HEK293 (cell line): ENCODE measurements at regions of chr2 and their contacts with region 1.

Region 1: DNA sequence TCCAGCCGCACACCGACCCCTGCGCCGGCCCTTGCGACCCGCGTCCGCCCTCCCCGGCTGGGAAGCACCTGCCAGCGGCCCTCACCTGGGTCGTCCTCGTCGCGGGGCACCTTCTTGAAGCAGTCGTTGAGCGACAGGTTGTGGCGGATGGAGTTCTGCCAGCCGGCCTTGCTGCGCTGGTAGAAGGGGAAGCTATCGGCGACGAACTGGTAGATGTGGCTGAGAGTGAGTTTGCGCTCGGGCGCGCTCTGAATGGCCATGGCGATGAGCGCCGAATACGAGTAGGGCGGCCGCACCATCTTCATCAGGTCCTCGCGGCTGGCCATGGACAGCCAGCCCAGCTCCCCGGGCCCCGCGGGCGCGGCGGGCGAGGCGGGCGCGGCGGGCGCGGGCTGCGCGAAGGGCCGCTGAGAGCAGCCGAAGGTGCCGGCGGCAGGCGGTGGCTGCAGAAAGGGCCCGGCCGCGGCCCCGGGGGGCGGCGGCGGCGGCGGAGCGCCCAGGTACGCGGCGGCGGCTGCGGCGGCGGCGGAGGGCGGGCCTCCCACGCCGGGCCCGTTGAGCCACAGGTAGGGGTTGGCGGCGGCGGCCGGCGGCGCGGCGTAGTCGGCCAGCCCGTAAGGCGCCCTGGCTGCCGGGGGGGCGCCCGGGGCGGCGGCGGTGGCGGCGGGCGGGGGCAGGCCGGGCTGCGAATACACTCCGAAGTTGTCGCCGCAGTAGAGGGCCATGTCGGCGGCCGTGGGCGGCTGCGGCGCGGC is 505 bp downstream of the FOXI3 start:
- H3K4me3 ChIP-seq: peak overlapping the region; percentile 76
- H3K27ac ChIP-seq: peak overlapping the region; percentile 52; the same call in 1 of the 2 replicates
- H3K4me1 ChIP-seq: 0 out of 2 replicates have a peak, but pooled peaks cover 2% of the 10 kb centered on the region
- CTCF ChIP-seq: no peak

Region 2: DNA sequence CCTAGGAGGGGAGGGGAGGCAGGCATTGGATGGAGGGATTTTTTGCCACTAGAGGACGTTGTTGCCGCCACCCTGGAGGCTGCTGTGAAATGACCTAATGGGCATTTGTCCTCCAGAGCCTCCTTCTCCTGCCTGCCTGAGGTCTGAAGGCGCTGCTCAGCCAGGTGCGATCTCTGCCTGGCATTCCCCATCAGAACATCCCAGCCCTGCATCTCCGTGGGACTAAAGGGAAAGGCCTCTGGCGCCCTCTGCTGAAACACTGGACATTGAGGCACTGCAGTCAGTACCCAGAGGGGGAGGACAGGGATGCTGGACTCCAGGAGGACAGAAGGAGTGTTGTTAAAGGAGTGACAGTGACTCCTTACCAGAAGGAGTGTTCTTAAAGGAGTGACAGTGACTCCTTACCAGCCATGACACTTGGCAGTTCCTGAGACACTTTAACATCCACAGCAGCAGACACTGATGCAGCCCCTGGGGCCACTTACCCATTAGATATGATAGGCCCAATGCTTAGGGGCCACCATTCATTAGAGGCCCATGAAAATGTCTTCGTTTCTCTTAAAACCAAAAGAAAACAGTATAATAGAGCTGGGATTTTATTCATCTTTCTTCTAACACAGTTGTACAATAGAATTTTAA is 264.8 kb before region 1 on chr2:
- CTCF ChIA-PET with region 1: interaction called, 44 read pairs
- POLR2A ChIA-PET with region 1: interaction called, 3 read pairs
- H3K4me3 ChIP-seq: no peak overlapping the region
- H3K27ac ChIP-seq: no peak overlapping the region
- H3K4me1 ChIP-seq: no peaks in the 10 kb centered on the region
- CTCF ChIP-seq: peak; percentile 68

Region 3: GRCh38 chr2:88199912-88200682 is 251.9 kb before region 1 on chr2:
- CTCF ChIA-PET with region 1: interaction called, 14 read pairs
- POLR2A ChIA-PET with region 1: no interaction called
- H3K4me3 ChIP-seq: no peak overlapping the region
- H3K27ac ChIP-seq: no peak overlapping the region
- H3K4me1 ChIP-seq: peaks cover 2% of the 10 kb centered on the region; the same call in 1 of the 2 replicates
- CTCF ChIP-seq: no peak

Region 4: GRCh38 chr2:88209521-88210131 is 242.4 kb before region 1 on chr2:
- CTCF ChIA-PET with region 1: interaction called, 18 read pairs
- POLR2A ChIA-PET with region 1: no interaction called
- H3K4me3 ChIP-seq: no peak overlapping the region
- H3K27ac ChIP-seq: no peak overlapping the region
- H3K4me1 ChIP-seq: no peaks in the 10 kb centered on the region
- CTCF ChIP-seq: no peak

Region 5: GRCh38 chr2:88464153-88464552 is 12.2 kb after region 1 on chr2:
- CTCF ChIA-PET with region 1: interaction called, 26 read pairs
- POLR2A ChIA-PET with region 1: no interaction called
- H3K4me3 ChIP-seq: no peak overlapping the region
- H3K27ac ChIP-seq: no peak overlapping the region
- H3K4me1 ChIP-seq: no peaks in the 10 kb centered on the region
- CTCF ChIP-seq: no peak